ENCODE measurements at regions of chr9 and their contacts with region 1.

Region 1: DNA sequence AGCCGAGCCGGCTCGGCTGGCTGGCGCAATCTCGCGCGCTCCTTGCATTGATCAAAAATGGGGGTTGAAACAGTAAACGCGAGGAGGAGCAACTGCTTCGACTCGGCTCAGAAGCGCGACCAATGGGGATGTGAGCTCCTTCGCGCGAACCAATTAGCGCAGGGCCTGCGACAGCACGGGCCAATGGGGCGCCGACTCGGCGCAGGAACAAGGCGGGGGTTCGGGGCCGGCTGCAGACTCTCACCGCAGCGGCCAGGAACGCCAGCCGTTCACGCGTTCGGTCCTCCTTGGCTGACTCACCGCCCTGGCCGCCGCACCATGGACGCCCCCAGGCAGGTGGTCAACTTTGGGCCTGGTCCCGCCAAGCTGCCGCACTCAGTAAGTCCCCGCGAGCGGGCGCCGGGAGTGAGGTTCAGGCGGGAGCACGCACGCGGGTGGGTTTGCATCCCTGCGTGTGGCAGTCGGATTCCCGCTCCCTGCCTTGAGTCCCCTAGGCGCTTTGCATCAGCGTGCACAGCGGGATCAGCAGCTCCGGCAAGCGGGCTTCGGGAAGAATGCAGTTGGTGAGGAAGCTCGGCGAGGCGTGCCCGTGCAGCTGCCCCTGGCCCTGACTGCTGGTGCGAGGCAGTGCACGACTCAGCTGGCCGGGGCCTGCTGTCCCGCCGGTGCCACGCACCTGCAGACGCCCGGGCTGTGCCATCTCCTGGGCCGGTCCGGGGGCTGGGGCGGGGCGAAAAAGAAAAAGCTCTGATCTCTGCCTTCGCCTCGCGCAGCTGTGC is at the start of gene PSAT1:
- DNase-seq: peak; percentile 95
- ATAC-seq: peak; percentile 95
- H3K4me3 Mint-ChIP-seq: peak within 1 kb of the TSS; percentile 90
- H3K27ac Mint-ChIP-seq: peak within 1 kb of the TSS; percentile 99
- H3K4me1 Mint-ChIP-seq: peaks cover 44% of the 10 kb centered on the region
- H3K27me3 Mint-ChIP-seq: no peaks in the 10 kb centered on the region
- CTCF ChIP-seq: no peak
- total RNA-seq, gene PSAT1: 174 to 182 TPM

Region 2: GRCh38 chr9:78286125-78286524 is 11.0 kb before region 1 on chr9:
- CTCF ChIA-PET with region 1: interaction called, 4 read pairs
- POLR2A ChIA-PET with region 1: interaction called, 11 read pairs
- intact Hi-C with region 1: no loop called
- DNase-seq: no peak
- ATAC-seq: no peak
- H3K4me3 Mint-ChIP-seq: no peak overlapping the region
- H3K27ac Mint-ChIP-seq: no peak overlapping the region
- H3K4me1 Mint-ChIP-seq: no peaks in the 10 kb centered on the region
- H3K27me3 Mint-ChIP-seq: no peaks in the 10 kb centered on the region
- CTCF ChIP-seq: no peak

Region 3: DNA sequence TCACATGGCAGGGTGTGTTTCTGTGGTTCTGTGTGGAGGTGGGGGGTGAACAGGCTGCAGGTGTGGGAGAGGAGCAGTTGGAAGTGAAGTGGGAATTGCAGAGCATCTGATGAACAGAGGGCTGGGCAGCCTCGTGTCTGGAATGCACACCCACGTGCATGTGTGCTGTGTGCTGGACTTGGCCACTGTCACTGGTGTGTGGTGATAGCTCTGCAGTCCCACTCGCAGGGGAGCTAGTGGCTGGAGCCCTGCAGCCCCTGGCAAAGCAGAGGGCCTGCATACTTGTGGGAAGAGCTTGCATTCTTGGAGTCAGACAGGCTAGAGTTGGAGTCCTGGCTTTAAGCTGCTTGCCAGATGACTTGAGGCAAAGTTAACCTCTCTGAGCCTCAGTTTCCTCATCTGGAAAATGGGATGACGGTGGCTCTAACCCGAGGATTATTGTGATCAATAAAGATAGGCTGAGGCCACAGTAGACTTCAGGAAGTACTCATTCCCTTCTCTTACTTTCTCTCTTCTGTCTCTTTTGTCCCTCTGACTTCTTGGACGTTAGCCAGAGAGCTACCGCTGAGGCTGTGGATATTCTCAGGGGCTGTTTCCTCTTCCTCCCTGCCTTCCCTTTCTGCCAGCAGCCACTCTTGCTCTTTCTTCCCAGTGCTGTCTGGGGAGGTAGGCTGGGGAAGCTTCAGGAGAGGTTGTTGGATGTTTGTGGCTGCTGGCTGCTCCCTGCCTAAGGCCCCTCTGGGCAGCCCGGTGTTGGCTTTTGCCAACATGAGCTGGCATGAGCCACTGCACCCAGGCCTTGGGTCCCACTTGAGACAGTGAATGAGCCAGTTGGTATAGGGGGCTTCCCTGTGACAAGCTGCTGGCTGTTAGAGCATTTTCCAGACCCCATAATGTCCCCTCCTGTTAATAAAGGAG is 18.1 kb after region 1 on chr9:
- CTCF ChIA-PET with region 1: interaction called, 9 read pairs
- POLR2A ChIA-PET with region 1: interaction called, 36 read pairs
- intact Hi-C with region 1: no loop called
- DNase-seq: no peak
- ATAC-seq: no peak
- H3K4me3 Mint-ChIP-seq: no peak overlapping the region
- H3K27ac Mint-ChIP-seq: no peak overlapping the region
- H3K4me1 Mint-ChIP-seq: peaks cover 5% of the 10 kb centered on the region
- H3K27me3 Mint-ChIP-seq: no peaks in the 10 kb centered on the region
- CTCF ChIP-seq: no peak

Region 4: GRCh38 chr9:78320875-78321496 is 23.9 kb after region 1 on chr9:
- CTCF ChIA-PET with region 1: no interaction called
- POLR2A ChIA-PET with region 1: interaction called, 12 read pairs
- intact Hi-C with region 1: no loop called
- DNase-seq: no peak
- ATAC-seq: no peak
- H3K4me3 Mint-ChIP-seq: no peak overlapping the region
- H3K27ac Mint-ChIP-seq: no peak overlapping the region
- H3K4me1 Mint-ChIP-seq: no peaks in the 10 kb centered on the region
- H3K27me3 Mint-ChIP-seq: no peaks in the 10 kb centered on the region
- CTCF ChIP-seq: no peak

Region 5: DNA sequence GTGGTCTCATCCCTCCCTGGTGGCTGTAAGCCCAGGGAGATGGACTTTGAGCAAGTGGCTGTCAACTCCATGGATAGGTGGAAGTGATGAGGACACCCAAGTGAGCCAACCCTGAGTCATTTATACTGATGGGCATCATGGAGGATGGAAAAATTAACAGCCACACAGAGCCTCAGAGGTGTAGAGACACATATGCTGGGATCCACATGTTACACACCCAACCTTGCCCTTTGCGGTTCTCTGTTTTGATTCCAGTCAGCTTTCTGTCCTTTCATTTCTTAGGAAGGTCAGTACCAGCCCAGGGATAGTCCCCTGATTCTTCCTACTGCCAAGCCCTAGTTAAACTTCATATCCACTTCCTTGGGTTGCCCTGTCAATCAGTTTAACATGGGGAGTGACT is 51.8 kb after region 1 on chr9:
- CTCF ChIA-PET with region 1: no interaction called
- POLR2A ChIA-PET with region 1: no interaction called
- intact Hi-C with region 1: no loop called
- DNase-seq: no peak
- ATAC-seq: no peak
- H3K4me3 Mint-ChIP-seq: no peak overlapping the region
- H3K27ac Mint-ChIP-seq: no peak overlapping the region
- H3K4me1 Mint-ChIP-seq: peaks cover 9% of the 10 kb centered on the region
- H3K27me3 Mint-ChIP-seq: no peaks in the 10 kb centered on the region
- CTCF ChIP-seq: no peak

Region 6: DNA sequence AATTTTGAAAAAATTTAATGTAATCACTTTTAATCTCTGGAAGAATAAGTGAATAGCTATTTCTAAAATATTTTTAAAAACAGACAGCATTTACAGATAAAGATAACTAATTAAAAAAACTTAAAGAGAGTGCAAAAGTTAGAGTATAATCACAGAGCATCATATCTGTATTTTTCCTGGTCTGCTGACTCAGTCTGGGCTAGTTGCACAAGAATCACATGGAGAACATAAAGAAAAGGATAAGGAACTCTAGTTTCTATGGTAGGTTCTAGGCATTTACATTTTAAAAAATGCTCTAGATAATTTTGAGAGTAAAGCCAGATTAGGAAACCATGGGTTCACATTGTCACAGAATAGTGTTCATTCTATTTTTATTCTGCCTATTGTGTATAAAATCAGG is 347.3 kb after region 1 on chr9:
- CTCF ChIA-PET with region 1: no interaction called
- POLR2A ChIA-PET with region 1: no interaction called
- intact Hi-C with region 1: no loop called
- DNase-seq: no peak
- ATAC-seq: no peak
- H3K4me3 Mint-ChIP-seq: no peak overlapping the region
- H3K27ac Mint-ChIP-seq: no peak overlapping the region
- H3K4me1 Mint-ChIP-seq: no peaks in the 10 kb centered on the region
- H3K27me3 Mint-ChIP-seq: no peaks in the 10 kb centered on the region
- CTCF ChIP-seq: no peak

Measured in activated CD8-positive, alpha-beta T cell treated with anti-CD3 and anti-CD28 coated beads for 36 hours (primary cell).